AG04450 (cell line): ENCODE measurements at regions of chr16 and their contacts with region 1.

Region 1: DNA sequence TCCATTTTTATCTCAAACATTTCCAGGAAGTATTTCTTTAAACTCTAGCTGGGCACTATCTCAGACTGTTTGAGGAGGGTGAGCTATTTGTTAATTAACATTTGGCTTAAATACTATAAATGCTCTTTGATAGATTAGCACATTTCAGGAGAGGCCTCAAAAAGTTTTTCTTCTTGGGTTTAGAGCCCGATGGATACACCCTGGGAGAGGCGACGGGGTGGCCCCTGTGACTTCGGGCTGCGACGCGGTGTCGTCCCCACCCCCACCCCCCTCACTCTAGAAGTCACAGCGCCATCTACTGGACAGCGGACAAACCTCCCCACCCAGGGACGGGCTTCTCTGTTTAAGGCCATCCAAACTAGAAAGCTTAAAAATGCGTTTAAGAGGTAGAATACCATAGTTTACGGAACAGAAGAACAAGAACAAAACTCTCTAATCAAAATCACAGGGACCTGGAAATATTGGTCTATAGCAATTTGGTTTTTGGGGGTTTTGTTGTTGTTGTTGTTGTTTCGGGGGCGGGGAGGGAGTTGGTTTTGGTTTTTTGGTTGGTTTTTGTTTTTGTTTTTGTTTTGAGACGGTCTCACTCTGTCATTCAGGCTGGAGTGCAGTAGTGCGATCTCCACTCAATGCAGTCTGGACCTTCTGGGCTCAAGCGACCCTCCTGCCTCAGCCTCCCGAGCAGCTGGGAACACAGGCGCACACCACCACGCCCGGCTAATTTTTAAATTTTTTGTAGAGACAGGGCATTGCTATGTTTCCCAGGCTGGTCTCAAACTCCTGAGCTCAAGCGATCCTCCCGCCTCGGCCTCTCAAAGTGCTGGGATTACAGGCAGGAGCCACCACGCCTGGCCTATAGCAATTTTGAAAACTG is 254.4 kb downstream of the C16orf95 start:
- DNase-seq: no peak
- H3K4me3 ChIP-seq: peak overlapping the region; percentile 37
- H3K27ac ChIP-seq: no peak overlapping the region
- H3K27me3 ChIP-seq: peaks cover 2% of the 10 kb centered on the region
- CTCF ChIP-seq: peak; percentile 91

Region 2: GRCh38 chr16:86563489-86564345 is 499.1 kb before region 1 on chr16:
- CTCF ChIA-PET with region 1: interaction called, 148 read pairs
- POLR2A ChIA-PET with region 1: no interaction called
- DNase-seq: peak; percentile 80
- H3K4me3 ChIP-seq: peak overlapping the region; percentile 50
- H3K27ac ChIP-seq: peak overlapping the region; percentile 47
- H3K27me3 ChIP-seq: peaks cover 2% of the 10 kb centered on the region
- CTCF ChIP-seq: peak; percentile 100

Region 3: DNA sequence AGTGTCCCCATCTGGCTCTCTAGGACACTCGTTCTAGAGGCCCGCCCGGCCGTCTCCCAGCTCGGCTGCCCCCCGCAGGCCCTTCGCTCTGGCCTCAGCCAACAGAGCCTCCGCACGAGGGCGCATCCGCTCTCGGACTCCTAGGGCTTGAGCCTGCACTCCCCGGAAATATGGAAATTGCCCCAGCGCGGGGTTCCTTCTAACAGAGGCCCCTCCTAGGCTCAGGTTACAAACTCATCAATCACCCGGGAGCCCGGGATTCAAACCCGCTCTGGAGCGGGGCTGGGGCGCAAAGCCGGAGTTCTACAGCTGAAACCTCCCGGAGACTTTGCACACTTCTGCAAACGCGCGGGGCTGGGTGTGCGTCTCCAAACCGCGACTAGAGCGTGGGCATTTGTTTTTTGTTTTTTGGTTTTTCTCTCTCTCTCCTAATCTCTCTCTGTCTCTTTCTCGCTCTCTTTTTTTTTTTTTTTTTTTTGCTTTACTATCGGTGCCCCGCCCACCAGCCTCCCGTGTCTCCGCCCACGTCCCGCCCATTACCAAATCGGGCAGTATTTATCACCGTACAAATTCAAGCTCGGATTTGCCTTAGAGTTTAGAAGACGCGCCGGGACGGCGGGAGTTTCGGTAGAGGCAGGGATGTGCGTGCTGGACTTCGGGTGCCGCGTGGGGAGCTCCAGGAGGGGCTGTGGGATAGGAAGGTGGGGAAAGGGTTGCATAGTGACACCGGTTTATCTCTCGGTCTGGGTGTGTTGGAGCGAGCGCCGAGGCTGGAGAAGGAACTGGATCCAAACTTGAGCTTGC is 486.9 kb before region 1 on chr16:
- CTCF ChIA-PET with region 1: interaction called, 21 read pairs
- POLR2A ChIA-PET with region 1: no interaction called
- DNase-seq: peak; percentile 95
- H3K4me3 ChIP-seq: peak overlapping the region; percentile 76
- H3K27ac ChIP-seq: peak overlapping the region; percentile 100
- H3K27me3 ChIP-seq: no peaks in the 10 kb centered on the region
- CTCF ChIP-seq: peak; percentile 86

Region 4: DNA sequence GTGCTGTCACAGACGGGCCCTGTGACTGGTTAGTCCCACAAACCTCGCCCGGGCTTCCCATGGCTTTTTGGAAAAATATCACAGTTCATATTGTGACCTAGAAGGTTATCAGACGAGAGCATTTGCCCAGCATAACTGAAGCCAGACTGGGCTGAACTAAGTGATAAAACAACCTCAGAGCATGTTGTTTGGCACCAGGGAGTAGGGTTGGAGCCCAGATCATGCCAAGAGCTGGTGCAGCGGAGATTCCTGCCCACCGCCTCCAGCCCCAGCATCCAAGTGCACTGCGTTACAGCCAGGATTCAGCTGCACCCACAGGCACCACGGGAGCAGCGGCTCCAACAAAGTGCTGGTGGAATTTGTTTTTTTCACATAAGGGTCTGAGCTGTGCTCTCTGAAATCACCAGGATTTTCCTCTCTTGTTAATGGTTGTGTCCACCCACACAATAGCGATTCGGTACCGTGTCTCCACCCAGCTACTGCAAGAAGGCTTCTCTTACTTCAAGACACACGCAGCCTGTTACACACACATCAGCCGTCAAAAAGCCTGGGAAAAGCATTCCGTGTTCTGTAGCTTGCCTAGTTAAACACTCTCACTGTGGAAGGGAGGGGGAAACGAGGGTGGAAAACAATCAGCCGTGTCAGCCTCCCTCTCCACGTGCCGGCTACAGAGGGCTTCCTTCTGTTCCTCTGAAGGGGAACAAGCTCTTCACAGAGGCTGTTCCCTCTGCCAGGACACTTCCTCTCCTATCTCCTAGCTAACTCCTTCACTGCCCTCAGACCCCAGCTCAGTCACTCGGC is 19.4 kb before region 1 on chr16:
- CTCF ChIA-PET with region 1: interaction called, 43 read pairs
- POLR2A ChIA-PET with region 1: interaction called, 6 read pairs
- DNase-seq: peak; percentile 30
- H3K4me3 ChIP-seq: no peak overlapping the region
- H3K27ac ChIP-seq: no peak overlapping the region
- H3K27me3 ChIP-seq: peaks cover 11% of the 10 kb centered on the region
- CTCF ChIP-seq: no peak

Region 5: GRCh38 chr16:87278191-87279095 is 215.6 kb after region 1 on chr16:
- CTCF ChIA-PET with region 1: interaction called, 55 read pairs
- POLR2A ChIA-PET with region 1: interaction called, 4 read pairs
- DNase-seq: peak; percentile 68
- H3K4me3 ChIP-seq: no peak overlapping the region
- H3K27ac ChIP-seq: no peak overlapping the region
- H3K27me3 ChIP-seq: no peaks in the 10 kb centered on the region
- CTCF ChIP-seq: peak; percentile 96